PC-9 (cell line): ENCODE measurements at regions of chr2 and their contacts with region 1.

Region 1: GRCh38 chr2:173249661-173250641 is 104.7 kb upstream of the CDCA7 start:
- DNase-seq: no peak
- H3K4me3 ChIP-seq: no peak overlapping the region
- H3K27ac ChIP-seq: no peak overlapping the region
- H3K4me1 ChIP-seq: no peaks in the 10 kb centered on the region; the same call in 1 of the 2 replicates
- H3K27me3 ChIP-seq: no peaks in the 10 kb centered on the region
- CTCF ChIP-seq: no peak

Region 2: GRCh38 chr2:172884336-172884735 is 365.6 kb before region 1 on chr2:
- CTCF ChIA-PET with region 1: no interaction called
- POLR2A ChIA-PET with region 1: no interaction called
- intact Hi-C with region 1: loop called (anchors 5 kb)
- DNase-seq: no peak
- H3K4me3 ChIP-seq: no peak overlapping the region
- H3K27ac ChIP-seq: no peak overlapping the region
- H3K4me1 ChIP-seq: 0 out of 2 replicates have a peak, but pooled peaks cover 5% of the 10 kb centered on the region
- H3K27me3 ChIP-seq: no peaks in the 10 kb centered on the region
- CTCF ChIP-seq: no peak

Region 3: DNA sequence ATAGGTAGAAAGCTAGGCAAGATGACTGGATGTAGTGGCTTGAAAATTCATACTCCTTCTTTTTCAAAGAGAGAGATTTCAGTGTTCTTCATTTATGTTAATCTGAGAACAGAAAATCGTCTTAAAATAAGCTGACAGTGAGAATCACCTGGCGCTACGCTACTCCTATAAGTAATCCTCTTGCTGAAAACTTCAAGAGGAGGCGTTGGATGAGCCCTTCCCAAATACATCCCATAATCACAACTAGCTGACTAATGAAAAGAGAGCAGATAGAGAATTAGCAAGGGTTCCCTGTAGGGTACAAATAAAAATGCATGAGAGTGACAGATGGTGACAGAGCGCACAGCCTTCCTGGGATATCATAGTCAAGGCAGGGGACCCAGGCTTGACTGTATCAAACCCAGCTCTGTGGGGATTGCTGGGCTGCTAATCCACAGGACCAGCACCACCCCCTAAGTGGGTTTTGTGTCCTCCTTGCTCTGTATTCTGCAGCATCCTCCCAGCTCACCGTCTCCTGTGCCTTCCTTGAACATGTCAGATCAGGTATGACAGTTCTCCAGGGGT is 435.0 kb after region 1 on chr2:
- CTCF ChIA-PET with region 1: interaction called, 14 read pairs
- POLR2A ChIA-PET with region 1: no interaction called
- intact Hi-C with region 1: no loop called
- DNase-seq: no peak
- H3K4me3 ChIP-seq: no peak overlapping the region
- H3K27ac ChIP-seq: no peak overlapping the region
- H3K4me1 ChIP-seq: no peaks in the 10 kb centered on the region; the same call in 1 of the 2 replicates
- H3K27me3 ChIP-seq: no peaks in the 10 kb centered on the region
- CTCF ChIP-seq: no peak

Region 4: DNA sequence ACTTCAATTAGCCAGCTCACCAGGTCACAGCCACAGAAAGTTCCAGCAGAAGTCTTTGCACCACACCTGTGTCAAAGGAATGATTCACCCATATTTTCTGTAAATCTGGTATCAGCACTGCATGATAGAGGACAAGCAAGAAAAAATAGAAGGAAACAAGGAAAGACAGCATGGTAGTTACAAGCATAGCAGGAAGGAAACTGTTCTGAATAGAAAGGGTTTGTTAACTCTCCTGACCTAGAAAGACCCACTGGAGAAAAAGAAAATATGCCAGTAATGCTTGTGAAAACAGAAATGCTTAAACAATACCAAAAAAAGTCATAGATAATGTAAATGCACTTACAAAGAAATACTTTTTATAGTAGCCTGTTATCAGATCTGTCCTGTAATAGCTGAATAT is 1186.4 kb after region 1 on chr2:
- CTCF ChIA-PET with region 1: no interaction called
- POLR2A ChIA-PET with region 1: no interaction called
- intact Hi-C with region 1: no loop called
- DNase-seq: no peak
- H3K4me3 ChIP-seq: no peak overlapping the region
- H3K27ac ChIP-seq: no peak overlapping the region
- H3K4me1 ChIP-seq: no peaks in the 10 kb centered on the region
- H3K27me3 ChIP-seq: no peaks in the 10 kb centered on the region
- CTCF ChIP-seq: no peak